ENCODE measurements at regions of chr5 and their contacts with region 1.

Region 1: DNA sequence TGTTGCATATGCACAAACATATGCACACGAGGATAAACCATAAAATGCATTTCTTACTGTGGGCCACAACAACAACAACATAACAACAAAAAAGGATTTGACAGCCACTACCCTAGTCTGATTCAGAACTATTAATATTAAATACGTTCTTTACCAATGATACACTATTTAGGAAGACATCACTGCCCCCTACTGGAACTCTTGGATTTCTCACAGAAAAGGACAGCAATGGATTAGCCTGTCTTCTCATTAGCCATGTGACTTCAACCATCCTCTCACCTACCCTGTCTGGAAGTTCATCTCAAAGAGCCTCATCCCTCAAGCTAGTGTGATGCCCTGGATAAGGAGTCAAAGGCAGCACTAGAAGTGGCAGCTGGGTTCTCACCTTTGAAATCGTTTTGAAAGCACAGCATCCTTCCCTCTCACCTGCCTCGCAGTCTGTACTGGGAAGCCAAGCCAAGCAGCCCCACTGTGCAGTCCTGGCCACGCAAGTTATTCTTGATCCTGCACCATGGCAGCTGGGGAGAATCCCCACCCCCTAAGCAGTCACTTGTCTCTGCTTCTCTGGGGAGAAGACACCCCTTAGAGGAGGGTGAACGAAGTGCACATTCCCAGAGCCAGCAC is 64.6 kb downstream of the SH3TC2 start:
- DNase-seq: peak; percentile 16 to 51 (median 21)
- ATAC-seq: peak; percentile 87
- H3K4me3 ChIP-seq: no peak overlapping the region
- H3K27ac ChIP-seq: no peak overlapping the region
- H3K4me1 ChIP-seq: no peaks in the 10 kb centered on the region
- H3K27me3 ChIP-seq: no peaks in the 10 kb centered on the region
- CTCF ChIP-seq: peak; percentile 48 to 70 (median 57); a peak in 5 of 6 replicates
- EP300 ChIP-seq: no peak
- POLR2A ChIP-seq: no peak
- RAD21 ChIP-seq: peak; percentile 61 to 67

Region 2: DNA sequence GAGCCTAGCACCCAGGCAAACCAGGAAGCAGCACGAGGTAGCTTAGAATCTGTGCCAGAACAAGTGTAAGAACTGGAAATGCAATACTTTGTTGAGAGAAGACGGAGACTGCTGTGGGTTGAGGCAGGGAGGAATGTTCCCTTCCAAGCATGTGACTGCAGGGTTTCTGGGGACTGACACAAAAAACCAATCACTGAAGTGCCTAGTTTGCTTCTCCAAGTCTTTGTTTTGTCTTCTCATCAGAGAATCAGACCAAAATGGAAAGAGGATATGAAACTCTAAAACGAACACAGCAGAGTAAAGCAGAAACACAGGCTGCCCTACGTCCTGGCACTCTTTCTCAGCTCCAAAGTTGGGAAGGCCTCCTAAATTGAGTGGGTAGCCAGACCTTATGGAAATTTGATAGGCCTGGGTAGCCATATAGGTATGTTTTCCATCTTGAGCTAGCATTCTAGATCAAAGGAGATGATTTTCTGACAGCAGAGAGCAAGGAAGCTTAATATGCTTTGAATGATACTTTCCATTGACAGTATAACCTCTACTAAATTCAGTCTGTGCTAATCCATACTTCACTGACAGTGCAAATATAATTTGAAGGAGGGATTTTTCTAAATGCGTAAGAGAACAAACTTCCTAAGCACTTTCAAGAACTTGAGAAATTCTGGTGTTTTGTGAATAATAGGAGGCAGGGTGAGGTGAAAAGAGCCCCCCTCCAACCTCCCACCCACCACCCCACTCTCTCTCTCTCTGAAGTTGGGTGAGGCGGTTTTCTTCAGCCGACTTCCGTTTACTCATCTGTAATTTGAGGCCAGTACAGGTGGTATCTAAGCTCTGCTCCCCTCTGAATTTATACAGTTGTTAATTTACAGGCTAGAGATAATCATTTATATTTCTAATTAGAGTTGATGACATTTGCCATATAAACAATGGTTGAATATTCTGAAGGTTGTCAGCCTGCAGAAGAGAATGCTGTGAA is 166.4 kb before region 1 on chr5:
- CTCF ChIA-PET with region 1: no interaction called
- POLR2A ChIA-PET with region 1: no interaction called
- in situ Hi-C with region 1: no loop called
- intact Hi-C with region 1: loop called (anchors 10 kb)
- DNase-seq: no peak
- ATAC-seq: no peak
- H3K4me3 ChIP-seq: no peak overlapping the region
- H3K27ac ChIP-seq: no peak overlapping the region
- H3K4me1 ChIP-seq: peaks cover 0 to under 1% of the 10 kb centered on the region in 2 experiments; a peak in 2 of 5 replicates
- H3K27me3 ChIP-seq: peaks cover 28 to 36% of the 10 kb centered on the region in 2 experiments
- CTCF ChIP-seq: no peak
- EP300 ChIP-seq: no peak
- POLR2A ChIP-seq: no peak
- RAD21 ChIP-seq: no peak

Region 3: DNA sequence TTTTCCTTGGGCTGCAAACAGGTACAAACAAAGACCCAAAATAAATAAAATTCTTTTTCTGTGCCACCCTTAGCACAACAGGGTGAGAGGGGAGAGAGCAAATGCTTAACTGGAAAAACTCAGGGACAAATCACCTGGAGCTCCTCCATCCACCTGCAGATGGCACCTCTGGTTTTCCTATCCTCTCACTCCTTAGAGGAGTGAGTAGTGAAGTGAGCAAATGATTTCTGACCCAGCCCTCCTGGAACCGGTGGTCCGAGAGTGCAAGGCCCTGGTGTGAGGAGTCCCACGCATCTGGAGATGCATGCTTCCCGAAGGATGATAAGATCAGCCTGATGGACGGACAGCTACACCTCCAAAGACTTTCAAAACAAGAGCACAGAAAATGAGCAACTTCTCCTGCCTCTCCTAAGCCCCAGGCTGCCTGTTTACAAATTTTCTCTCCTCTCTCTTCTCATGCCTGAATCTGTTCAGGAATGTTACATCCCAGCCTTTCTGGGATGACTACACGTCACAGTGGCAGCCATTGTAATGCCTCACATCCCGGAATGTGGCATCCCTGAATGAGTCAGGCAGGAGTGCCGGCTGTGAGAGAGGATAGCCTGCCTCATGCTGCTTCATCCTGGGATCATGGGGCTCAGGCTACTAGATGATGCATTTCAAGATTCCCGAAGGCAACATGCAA is 85.4 kb before region 1 on chr5:
- CTCF ChIA-PET with region 1: no interaction called
- POLR2A ChIA-PET with region 1: no interaction called
- in situ Hi-C with region 1: no loop called
- intact Hi-C with region 1: loop called (anchors 10 kb)
- DNase-seq: no peak
- ATAC-seq: peak; percentile 50; the same call in 2 of the 3 replicates
- H3K4me3 ChIP-seq: no peak overlapping the region
- H3K27ac ChIP-seq: no peak overlapping the region
- H3K4me1 ChIP-seq: peaks cover 0 to 6% of the 10 kb centered on the region in 2 experiments; a peak in 2 of 5 replicates
- H3K27me3 ChIP-seq: peaks cover 8 to 11% of the 10 kb centered on the region in 2 experiments; a peak in 1 of 5 replicates
- CTCF ChIP-seq: peak in 1 of 3 experiments; percentile 27; a peak in 1 of 6 replicates
- EP300 ChIP-seq: no peak
- POLR2A ChIP-seq: no peak
- RAD21 ChIP-seq: peak; percentile 6 to 38; a peak in 2 of 4 replicates

Region 4: DNA sequence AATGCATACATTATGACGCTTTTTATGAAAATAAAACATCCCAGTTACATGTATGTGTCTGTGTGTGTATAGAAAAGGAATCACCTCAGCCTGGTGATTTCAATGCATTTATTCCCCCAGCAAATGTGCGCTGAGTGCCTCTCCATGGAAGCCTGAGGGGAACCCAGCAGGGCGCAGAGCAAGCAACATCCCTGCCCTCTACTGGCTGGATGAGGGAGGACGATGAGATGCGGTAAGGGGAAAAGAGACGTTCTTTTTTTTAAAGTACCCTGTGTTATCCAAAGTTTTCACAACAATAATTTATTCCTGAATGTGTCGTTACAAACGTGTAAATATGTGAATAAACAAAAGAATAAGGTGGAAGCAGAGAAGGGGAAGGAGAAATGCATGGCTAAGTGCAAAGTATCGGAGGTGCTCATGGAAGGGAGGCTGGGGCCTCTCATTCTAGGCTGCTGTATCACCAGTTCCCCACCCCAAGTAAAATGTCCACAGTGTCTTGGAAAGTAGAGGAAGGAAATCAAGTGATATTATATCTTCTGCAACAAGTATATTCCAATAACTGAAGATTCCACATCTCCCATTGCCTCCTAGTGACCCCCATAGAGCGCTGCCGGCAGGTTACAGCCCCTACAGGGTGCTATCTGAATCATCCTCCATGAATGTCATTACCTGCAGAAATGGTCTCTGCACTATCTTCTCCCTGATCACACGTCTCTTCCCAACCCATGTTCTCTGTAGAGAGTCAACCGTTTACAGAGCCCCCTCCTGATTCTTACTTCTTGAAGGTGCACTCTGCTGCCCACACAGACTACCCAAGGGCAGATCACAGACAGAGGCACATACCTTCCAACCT is 130.0 kb after region 1 on chr5:
- CTCF ChIA-PET with region 1: no interaction called
- POLR2A ChIA-PET with region 1: no interaction called
- in situ Hi-C with region 1: no loop called
- intact Hi-C with region 1: no loop called
- DNase-seq: peak; percentile 48 to 63 (median 60)
- ATAC-seq: peak; percentile 98
- H3K4me3 ChIP-seq: no peak overlapping the region
- H3K27ac ChIP-seq: no peak overlapping the region
- H3K4me1 ChIP-seq: no peaks in the 10 kb centered on the region
- H3K27me3 ChIP-seq: peaks cover 7 to 21% of the 10 kb centered on the region in 2 experiments; a peak in 4 of 5 replicates
- CTCF ChIP-seq: peak; percentile 76 to 83 (median 79)
- EP300 ChIP-seq: no peak
- POLR2A ChIP-seq: no peak
- RAD21 ChIP-seq: peak; percentile 59 to 70